SK-N-SH (cell line): ENCODE measurements at regions of chr1 and their contacts with region 1.

Region 1: DNA sequence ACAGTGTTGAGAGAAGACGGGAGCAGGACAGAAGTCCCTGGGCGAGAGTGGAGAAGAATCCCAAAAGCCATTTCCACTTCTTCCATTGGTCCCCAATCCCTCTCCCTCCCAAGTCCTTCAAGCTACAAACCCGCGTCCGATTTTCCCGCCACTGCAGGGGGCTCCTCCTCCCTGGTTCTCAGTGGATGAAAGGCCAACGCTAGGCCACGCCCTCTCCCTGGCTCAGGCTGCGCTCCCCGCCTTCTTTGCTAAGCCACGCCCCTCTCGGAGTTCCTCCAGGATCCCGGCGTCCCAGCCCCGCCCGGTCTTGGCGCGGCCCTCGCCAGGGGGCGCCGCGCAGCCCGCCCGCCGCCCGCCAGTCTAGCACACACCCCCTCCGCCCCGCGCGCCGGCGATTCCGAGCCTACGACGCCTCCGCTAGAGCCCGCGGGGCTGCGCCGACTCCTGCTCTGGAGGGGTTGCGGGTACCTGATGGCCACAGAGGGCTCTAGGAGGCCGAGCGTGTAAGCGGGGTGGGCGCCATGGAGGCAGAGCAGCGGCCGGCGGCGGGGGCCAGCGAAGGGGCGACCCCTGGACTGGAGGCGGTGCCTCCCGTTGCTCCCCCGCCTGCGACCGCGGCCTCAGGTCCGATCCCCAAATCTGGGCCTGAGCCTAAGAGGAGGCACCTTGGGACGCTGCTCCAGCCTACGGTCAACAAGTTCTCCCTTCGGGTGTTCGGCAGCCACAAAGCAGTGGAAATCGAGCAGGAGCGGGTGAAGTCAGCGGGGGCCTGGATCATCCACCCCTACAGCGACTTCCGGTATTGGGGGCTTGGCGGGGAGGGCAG is at the start of gene HCN3:
- DNase-seq: peak; percentile 98
- H3K4me3 ChIP-seq: peak within 1 kb of the TSS; percentile 71 to 78
- H3K27ac ChIP-seq: peak within 1 kb of the TSS; percentile 25 to 66; a peak in 3 of 4 replicates
- H3K4me1 ChIP-seq: peaks cover 5 to 22% of the 10 kb centered on the region in 2 experiments; a peak in 2 of 4 replicates
- H3K27me3 ChIP-seq: no peaks in the 10 kb centered on the region
- CTCF ChIP-seq: peak; percentile 70
- EP300 ChIP-seq: no peak
- RAD21 ChIP-seq: peak; percentile 46
- polyA plus RNA-seq, gene HCN3: 9.7 and 10.1 TPM in 2 replicates

Region 2: DNA sequence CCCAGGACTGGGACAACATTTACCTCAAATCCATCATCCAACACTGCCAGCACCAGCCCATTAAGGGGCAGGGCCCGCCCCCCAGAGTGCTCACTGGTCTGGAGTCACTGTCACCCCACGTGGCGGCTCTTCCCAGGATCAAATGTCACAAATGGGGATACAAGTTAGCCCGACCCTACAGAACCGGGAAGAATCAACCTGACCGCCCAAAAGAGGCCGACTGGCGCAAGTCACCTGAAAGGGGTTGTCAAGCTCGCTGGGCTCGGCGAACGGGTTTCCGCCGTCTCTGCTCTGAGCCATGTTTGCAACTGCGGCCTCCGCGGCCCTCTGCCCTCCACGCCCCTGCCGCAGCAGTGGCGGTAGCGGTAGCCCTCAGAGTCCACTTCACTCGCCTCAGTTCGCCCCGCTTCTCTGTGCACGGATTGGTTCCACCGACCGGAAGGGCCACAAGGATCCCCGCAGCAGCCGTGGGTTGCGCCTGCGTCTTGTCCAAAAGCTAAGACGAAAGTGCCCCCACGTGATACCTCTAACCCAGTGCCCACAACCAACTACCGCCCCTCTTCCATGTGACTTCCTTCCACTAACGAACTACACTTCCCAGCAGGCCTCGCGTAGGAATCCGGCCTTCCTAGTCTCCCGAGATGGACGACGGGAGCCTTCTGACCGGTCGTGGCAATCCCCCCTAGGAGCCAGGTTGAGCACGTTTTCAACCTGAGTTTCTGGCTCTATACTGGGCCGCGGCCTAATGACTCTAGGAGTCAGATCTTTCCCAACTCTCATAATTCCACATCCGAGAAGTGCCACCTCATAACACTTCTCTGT is 15.2 kb before region 1 on chr1 and contains the start of gene SCAMP3:
- CTCF ChIA-PET with region 1: interaction called, 5 read pairs
- POLR2A ChIA-PET with region 1: interaction called, 13 read pairs
- DNase-seq: peak; percentile 95
- H3K4me3 ChIP-seq: peak within 1 kb of the TSS; percentile 93 to 94
- H3K27ac ChIP-seq: peak within 1 kb of the TSS; percentile 75 to 92
- H3K4me1 ChIP-seq: peaks cover 0 to 15% of the 10 kb centered on the region in 2 experiments; a peak in 2 of 4 replicates
- H3K27me3 ChIP-seq: no peaks in the 10 kb centered on the region
- CTCF ChIP-seq: 0 out of 2 replicates have a peak, but pooled peaks have one; percentile 1
- EP300 ChIP-seq: no peak
- RAD21 ChIP-seq: no peak
- polyA plus RNA-seq, gene SCAMP3: 193 and 225 TPM in 2 replicates

Region 3: GRCh38 chr1:155308493-155309422 is 31.5 kb after region 1 on chr1 and contains the start of gene FDPS:
- CTCF ChIA-PET with region 1: interaction called, 11 read pairs
- POLR2A ChIA-PET with region 1: no interaction called
- DNase-seq: peak; percentile 94
- H3K4me3 ChIP-seq: peak within 1 kb of the TSS; percentile 74 to 76
- H3K27ac ChIP-seq: peak within 1 kb of the TSS; percentile 79 to 92
- H3K4me1 ChIP-seq: peaks cover 0 to 10% of the 10 kb centered on the region in 2 experiments; a peak in 1 of 4 replicates
- H3K27me3 ChIP-seq: no peaks in the 10 kb centered on the region
- CTCF ChIP-seq: no peak
- EP300 ChIP-seq: no peak
- RAD21 ChIP-seq: no peak
- polyA plus RNA-seq, gene FDPS: 126 and 142 TPM in 2 replicates